ENCODE measurements at regions of chr19 and their contacts with region 1.

Region 1: DNA sequence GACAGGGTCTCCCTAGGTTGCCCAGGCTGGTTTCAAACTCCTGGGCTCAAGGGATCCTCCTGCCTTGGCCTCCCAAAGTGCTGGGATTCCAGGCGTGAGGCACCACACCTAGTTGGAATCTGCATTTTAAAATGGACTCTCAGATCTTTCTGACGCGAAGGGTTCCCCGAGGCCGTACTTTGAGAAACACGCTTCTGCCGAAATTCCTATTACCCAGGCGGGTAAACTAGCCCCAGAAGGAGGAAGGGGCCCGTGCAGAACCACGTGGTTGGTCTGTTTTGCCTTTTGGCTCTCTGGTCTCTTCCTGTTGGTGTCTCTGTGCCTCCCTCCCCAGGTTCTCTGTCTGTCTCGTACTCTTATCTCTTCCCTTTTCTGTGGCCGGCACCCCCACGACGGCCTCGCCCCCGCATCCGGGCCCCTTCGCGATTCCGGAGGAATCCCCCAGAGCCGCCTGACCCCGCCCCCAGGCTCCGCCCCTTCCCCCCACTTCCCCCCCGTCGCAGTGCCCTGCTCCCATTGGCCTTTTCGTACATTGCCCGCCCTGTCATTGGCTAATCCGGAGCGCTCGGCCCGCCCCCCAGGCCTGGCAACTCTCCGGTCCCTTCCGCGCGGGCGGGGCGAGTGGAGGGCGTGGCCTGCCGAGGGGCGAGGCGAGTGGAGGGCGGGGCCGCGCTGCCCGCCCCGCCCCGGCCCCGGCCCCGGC is at the start of gene TNFAIP8L1:
- DNase-seq: peak; percentile 99
- ATAC-seq: peak; percentile 92
- H3K4me3 Mint-ChIP-seq: peak within 1 kb of the TSS; percentile 99
- H3K27ac Mint-ChIP-seq: peak within 1 kb of the TSS; percentile 97
- H3K4me1 Mint-ChIP-seq: peaks cover 44% of the 10 kb centered on the region
- H3K27me3 Mint-ChIP-seq: no peaks in the 10 kb centered on the region
- CTCF ChIP-seq: no peak
- total RNA-seq, gene TNFAIP8L1: 13.2 and 15.5 TPM in 2 replicates

Region 2: GRCh38 chr19:4267101-4267900 is 371.7 kb before region 1 on chr19:
- CTCF ChIA-PET with region 1: no interaction called
- POLR2A ChIA-PET with region 1: no interaction called
- intact Hi-C with region 1: loop called (anchors 1 kb)
- DNase-seq: peak; percentile 55
- ATAC-seq: peak; percentile 75
- H3K4me3 Mint-ChIP-seq: no peak overlapping the region
- H3K27ac Mint-ChIP-seq: no peak overlapping the region
- H3K4me1 Mint-ChIP-seq: peaks cover 15% of the 10 kb centered on the region
- H3K27me3 Mint-ChIP-seq: no peaks in the 10 kb centered on the region
- CTCF ChIP-seq: no peak

Region 3: DNA sequence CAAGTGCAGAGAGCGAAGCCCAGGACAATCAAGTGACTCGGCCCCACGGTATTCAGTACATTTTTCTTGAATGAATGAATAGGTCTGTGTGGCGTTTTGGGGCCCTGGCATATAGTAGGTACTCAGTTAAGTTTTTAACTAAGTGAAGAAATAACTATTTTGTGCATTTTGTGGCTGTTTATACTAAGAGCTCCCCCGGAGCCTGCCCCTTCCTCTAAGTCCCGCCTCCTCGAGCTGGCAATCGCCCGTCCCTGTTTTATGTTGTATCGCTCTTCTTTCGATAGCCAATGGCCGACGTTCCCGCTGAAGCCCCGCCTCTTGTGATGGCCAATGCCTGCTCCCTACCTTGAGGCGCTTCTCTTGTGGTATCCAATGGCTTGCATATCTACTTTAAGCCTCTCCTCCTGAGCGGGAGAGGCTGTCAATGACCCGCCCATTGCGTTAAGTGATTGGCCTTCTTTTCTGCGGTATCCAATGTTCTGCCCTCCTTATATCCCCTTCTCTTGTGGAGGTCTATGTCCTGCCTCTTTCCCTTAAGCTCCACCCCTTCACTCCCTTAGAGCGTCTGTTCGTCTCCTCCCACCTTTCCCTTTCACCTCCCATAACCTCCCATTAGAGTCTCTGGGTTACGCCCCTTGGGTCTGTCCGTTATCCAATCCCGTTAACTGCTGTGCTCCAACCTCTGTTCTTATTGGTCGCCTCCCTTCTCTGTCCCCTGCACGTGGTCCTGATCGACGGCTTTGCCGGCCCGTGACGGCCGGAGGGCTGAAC is 167.4 kb before region 1 on chr19:
- CTCF ChIA-PET with region 1: no interaction called
- POLR2A ChIA-PET with region 1: no interaction called
- intact Hi-C with region 1: loop called (anchors 2 kb)
- DNase-seq: peak; percentile 83
- ATAC-seq: peak; percentile 86
- H3K4me3 Mint-ChIP-seq: no peak overlapping the region
- H3K27ac Mint-ChIP-seq: no peak overlapping the region
- H3K4me1 Mint-ChIP-seq: peaks cover 22% of the 10 kb centered on the region
- H3K27me3 Mint-ChIP-seq: no peaks in the 10 kb centered on the region
- CTCF ChIP-seq: no peak

Region 4: GRCh38 chr19:4557971-4558941 is 80.7 kb before region 1 on chr19:
- CTCF ChIA-PET with region 1: interaction called, 10 read pairs
- POLR2A ChIA-PET with region 1: no interaction called
- intact Hi-C with region 1: loop called (anchors 1 kb)
- DNase-seq: peak; percentile 49
- ATAC-seq: peak; percentile 34
- H3K4me3 Mint-ChIP-seq: no peak overlapping the region
- H3K27ac Mint-ChIP-seq: no peak overlapping the region
- H3K4me1 Mint-ChIP-seq: peaks cover 4% of the 10 kb centered on the region
- H3K27me3 Mint-ChIP-seq: no peaks in the 10 kb centered on the region
- CTCF ChIP-seq: peak; percentile 99

Region 5: GRCh38 chr19:4576016-4576933 is 62.7 kb before region 1 on chr19:
- CTCF ChIA-PET with region 1: interaction called, 28 read pairs
- POLR2A ChIA-PET with region 1: interaction called, 4 read pairs
- intact Hi-C with region 1: loop called (anchors 1 kb)
- DNase-seq: peak; percentile 64
- ATAC-seq: peak; percentile 60
- H3K4me3 Mint-ChIP-seq: no peak overlapping the region
- H3K27ac Mint-ChIP-seq: no peak overlapping the region
- H3K4me1 Mint-ChIP-seq: peaks cover 3% of the 10 kb centered on the region
- H3K27me3 Mint-ChIP-seq: peaks cover 48% of the 10 kb centered on the region
- CTCF ChIP-seq: no peak

Region 6: GRCh38 chr19:4669723-4670480 is 30.9 kb after region 1 on chr19 and contains the start of gene MYDGF:
- CTCF ChIA-PET with region 1: interaction called, 3 read pairs
- POLR2A ChIA-PET with region 1: no interaction called
- intact Hi-C with region 1: loop called (anchors 1 kb)
- DNase-seq: peak; percentile 93
- ATAC-seq: peak; percentile 98
- H3K4me3 Mint-ChIP-seq: peak within 1 kb of the TSS; percentile 89
- H3K27ac Mint-ChIP-seq: peak within 1 kb of the TSS; percentile 77
- H3K4me1 Mint-ChIP-seq: peaks cover 18% of the 10 kb centered on the region
- H3K27me3 Mint-ChIP-seq: no peaks in the 10 kb centered on the region
- CTCF ChIP-seq: no peak
- total RNA-seq, gene MYDGF: 30.9 and 31.6 TPM in 2 replicates

Region 7: DNA sequence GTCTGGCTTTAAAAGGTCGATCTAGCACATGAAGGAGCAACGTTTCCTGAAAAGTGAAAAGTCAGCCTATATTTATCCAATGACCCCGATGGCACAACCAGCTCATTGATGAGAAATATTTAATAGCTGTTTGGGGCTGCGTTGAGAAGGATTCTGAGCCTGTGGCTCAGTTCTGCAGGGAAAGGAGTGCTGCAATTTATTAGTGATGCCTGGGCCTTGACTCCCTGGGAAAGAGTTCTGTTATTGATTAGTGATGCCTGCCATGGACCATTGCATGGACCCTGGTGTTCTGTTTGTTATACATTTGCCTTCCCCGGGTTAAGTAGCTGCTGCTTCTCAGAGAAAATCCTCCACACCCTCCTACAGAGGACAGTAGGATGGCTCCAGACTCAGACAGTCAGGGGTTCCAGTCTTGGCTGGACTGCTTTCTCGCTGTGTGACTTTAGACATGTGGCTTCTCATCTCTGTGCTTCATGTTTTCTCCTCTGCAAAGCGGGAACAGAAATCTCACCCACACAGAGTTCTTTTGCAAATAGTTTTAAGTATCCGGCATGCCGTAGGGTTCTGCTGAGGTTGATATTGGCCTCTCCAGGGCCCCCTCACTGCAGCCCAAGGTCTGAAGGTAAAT is 719.3 kb after region 1 on chr19:
- CTCF ChIA-PET with region 1: no interaction called
- POLR2A ChIA-PET with region 1: no interaction called
- intact Hi-C with region 1: no loop called
- DNase-seq: no peak
- ATAC-seq: no peak
- H3K4me3 Mint-ChIP-seq: no peak overlapping the region
- H3K27ac Mint-ChIP-seq: no peak overlapping the region
- H3K4me1 Mint-ChIP-seq: no peaks in the 10 kb centered on the region
- H3K27me3 Mint-ChIP-seq: peaks cover 17% of the 10 kb centered on the region
- CTCF ChIP-seq: no peak

Measured in activated B cell treated with CpG ODN at 0.5 μM for 24 hours (primary cell).